HAP-1 (cell line): ENCODE measurements at regions of chr12 and their contacts with region 1.

Region 1: GRCh38 chr12:104381731-104382480 is 74.8 kb upstream of the CHST11 start:
- DNase-seq: peak; percentile 64 to 87
- H3K4me3 ChIP-seq: no peak overlapping the region
- H3K4me1 ChIP-seq: no peaks in the 10 kb centered on the region
- H3K27me3 ChIP-seq: no peaks in the 10 kb centered on the region

Region 2: GRCh38 chr12:104485651-104486362 is 103.9 kb after region 1 on chr12:
- in situ Hi-C with region 1: no loop called
- DNase-seq: no peak
- H3K4me3 ChIP-seq: no peak overlapping the region
- H3K4me1 ChIP-seq: no peaks in the 10 kb centered on the region
- H3K27me3 ChIP-seq: no peaks in the 10 kb centered on the region

Region 3: DNA sequence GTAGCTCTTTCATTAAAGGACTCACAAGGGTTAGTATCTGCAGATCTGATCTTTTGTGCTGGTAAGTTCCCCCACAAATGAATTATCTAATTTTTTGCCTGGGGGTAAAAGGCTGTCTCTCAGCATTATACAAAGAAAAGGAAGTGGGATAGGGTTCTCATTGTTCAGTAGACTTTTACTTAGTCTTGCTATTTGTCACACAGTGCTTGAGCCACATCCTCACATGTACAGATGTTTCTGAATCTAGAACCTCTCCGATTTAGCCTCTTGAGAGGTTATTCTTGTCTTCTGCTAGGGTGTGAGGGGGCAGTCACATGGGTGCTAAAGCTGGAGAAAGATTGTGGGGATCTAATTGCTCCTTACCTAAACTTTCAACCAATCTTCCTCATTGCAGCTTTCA is 483.2 kb after region 1 on chr12:
- in situ Hi-C with region 1: loop called (anchors 25 kb)
- DNase-seq: peak in 1 of 2 experiments; percentile 22
- H3K4me3 ChIP-seq: no peak overlapping the region
- H3K4me1 ChIP-seq: peaks cover 8% of the 10 kb centered on the region; the same call in 1 of the 2 replicates
- H3K27me3 ChIP-seq: no peaks in the 10 kb centered on the region

Region 4: GRCh38 chr12:105053116-105053572 is 671.2 kb after region 1 on chr12:
- in situ Hi-C with region 1: loop called (anchors 5 kb)
- DNase-seq: peak; percentile 79 to 81
- H3K4me3 ChIP-seq: no peak overlapping the region
- H3K4me1 ChIP-seq: no peaks in the 10 kb centered on the region
- H3K27me3 ChIP-seq: no peaks in the 10 kb centered on the region